ENCODE measurements at regions of chr12 and their contacts with region 1.

Region 1: GRCh38 chr12:12562585-12563261 is at the start of gene DUSP16:
- DNase-seq: peak; percentile 96
- ATAC-seq: peak; percentile 98
- total RNA-seq, gene DUSP16: 11.6 TPM

Region 2: DNA sequence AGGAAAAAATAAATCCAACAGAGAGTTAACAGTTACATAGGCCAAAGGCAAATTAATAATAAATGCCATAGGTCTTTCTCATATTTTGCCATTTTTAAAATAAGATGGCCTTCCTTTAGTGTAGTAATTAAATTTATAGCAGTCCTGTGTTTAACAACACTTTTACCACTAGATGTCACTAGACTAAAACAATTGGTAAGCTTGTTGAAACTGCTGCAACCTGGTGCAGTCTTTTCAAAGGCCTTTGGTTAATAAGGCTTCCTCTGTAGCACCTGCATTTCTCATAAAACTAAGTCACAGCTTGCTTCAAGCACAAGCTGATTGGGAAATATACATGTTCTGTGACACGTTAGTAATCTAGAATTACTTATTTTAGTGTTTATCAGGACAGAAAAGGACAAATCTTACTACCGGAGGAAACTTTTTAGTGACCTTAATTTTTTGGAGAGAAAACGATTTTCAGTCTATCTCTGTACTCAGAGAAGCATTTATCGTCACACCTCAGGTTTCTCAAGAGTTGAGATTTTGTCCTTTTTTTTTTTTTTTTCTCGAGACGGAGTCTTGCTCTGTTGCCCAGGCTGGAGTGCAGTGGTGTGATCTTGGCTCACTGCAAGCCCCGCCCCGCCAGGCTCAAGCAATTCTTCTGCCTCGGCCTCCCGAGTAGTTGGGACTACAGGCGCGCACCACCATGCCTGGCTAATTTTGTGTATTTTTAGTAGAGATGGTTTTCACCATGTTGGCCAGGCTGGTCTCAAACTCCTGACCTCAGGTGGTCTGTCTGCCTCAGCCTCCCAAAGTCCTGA is 185.9 kb before region 1 on chr12:
- intact Hi-C with region 1: loop called (anchors 1 kb)
- DNase-seq: peak; percentile 60
- ATAC-seq: peak; percentile 71

Region 3: DNA sequence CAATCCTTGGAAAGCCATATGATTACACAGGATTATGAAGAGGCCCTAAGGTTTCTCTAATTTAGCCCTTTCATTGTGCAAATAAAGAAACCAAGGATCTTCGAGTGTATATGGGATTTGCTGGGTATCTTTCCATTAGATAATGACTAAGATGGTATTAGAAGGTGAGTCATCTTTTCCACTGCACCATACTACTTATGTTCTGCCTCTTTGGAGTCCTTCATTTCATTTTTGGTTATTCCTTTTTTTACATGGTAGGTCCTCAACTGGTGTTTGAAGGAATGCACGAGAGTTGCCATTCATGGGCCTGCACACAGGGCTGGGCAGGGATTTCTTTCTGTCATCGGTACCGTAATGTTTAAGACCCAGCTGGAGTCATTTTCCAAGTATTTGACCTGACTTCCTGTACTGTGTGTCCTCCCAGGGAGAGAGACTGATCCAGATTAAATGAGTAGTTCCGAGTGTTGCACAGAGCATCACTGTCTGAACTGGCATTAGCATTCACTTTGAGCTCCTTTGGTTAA is 120.1 kb before region 1 on chr12:
- intact Hi-C with region 1: loop called (anchors 5 kb)
- DNase-seq: no peak
- ATAC-seq: peak; percentile 72

Region 4: DNA sequence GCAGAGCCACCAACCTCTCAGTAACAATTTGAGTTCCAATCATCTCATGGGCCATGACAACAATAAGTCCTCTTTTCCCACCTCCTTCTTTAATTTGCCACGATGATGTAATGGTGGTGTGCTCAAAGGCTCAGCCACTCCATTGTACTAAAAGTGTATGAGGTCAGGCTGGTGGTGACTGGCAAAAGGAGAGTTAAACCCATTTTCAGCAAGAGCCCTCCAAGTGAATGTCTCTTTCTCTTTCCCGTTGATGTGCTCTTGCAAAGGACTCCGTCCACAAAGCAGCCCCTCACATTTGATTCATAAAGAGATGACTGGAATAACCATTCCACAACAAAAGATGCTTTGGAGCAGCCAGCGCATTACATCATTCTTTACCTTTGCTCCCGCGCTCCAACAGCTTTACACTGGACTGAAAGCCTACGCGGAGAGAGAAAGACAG is 41.7 kb before region 1 on chr12:
- intact Hi-C with region 1: loop called (anchors 5 kb)
- DNase-seq: no peak
- ATAC-seq: no peak

Region 5: GRCh38 chr12:12696562-12697383 is 134.1 kb after region 1 on chr12:
- intact Hi-C with region 1: loop called (anchors 5 kb)
- DNase-seq: peak; percentile 97
- ATAC-seq: peak; percentile 94

Region 6: GRCh38 chr12:12803186-12803585 is 240.5 kb after region 1 on chr12:
- intact Hi-C with region 1: no loop called
- DNase-seq: no peak
- ATAC-seq: peak; percentile 72